ENCODE measurements at regions of chr6 and their contacts with region 1.

Region 1: DNA sequence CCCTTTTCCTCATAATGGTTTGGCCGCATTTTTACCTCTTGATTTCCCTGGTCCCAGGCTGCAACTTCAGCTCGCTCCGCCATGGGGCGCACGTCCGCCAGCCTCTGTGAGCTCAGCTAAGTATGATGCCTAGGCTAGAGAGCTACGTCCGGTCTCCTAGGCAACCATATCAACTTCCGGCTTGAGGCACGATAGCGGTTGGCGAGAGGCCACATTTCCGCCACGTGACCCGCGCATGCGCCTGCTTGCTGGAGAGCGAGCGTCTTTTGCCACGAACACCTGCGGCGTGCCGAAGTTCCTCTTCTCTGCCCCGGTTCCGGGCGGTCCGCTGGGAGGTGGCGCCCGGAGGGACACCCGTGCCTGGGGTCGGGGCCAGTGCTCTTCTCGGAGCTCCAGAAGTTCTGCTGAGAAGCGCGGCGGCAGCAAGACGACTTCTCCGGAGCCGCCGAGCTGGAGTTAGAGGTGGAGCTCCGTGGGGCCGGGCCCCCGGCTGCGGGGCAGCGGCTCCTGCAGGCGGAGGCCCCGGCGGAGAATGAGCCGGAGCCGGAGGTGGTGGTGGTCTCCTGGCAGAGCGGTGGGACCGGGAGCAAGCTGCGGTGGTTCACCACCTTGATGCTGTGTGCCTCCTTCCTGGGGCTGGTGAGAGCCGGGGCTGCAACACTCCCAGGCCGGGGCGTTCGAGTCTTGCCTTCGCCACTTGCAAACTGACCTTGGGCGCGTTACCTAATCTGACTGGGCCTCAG is 172.0 kb downstream of the SLC16A10 start:
- DNase-seq: peak; percentile 98 to 99
- H3K4me3 ChIP-seq: peak overlapping the region; percentile 71 to 94
- H3K27ac ChIP-seq: peak overlapping the region; percentile 82
- H3K4me1 ChIP-seq: peaks cover 17% of the 10 kb centered on the region
- H3K27me3 ChIP-seq: no peaks in the 10 kb centered on the region
- CTCF ChIP-seq: peak; percentile 85 to 99 (median 89)
- POLR2A ChIP-seq: no peak

Region 2: DNA sequence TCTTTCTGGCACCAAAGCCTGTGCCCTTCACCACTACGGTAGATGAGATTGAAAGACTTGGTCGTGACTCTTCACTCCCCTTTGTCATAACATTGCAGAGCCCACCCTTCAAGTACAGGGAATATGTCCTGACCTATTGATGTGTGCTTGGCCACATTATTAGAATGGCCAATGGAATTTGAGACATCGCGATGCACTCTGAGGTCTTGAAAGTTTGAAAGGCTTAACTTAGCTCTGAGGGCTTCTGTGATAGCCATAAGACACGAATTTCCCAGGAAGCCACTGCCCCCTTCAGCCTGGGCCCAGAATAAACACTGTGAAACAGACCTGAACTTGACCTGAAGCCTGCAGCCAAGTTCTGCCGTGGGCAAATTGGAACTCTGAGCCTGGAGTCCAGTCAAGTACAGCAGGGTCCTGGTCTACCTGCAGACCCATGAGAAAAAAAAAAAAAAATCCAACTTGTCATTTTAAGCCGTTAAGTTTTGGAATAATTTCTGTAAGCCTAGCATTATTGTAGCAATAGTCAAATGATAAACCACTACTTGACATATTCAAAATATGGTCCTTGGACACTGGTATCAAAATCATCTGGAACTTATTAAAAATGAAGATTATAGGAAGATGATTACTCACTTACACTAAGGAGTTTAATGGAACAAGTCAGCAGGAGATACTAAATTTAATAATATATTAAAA is 383.4 kb after region 1 on chr6:
- intact Hi-C with region 1: loop called (anchors 10 kb)
- DNase-seq: peak in 1 of 2 donors; percentile 79
- H3K4me3 ChIP-seq: no peak overlapping the region
- H3K27ac ChIP-seq: no peak overlapping the region
- H3K4me1 ChIP-seq: peaks cover 18% of the 10 kb centered on the region
- H3K27me3 ChIP-seq: no peaks in the 10 kb centered on the region
- CTCF ChIP-seq: peak in 1 of 3 experiments; percentile 28
- POLR2A ChIP-seq: no peak

Region 3: GRCh38 chr6:112054555-112055160 is 795.4 kb after region 1 on chr6:
- intact Hi-C with region 1: loop called (anchors 10 kb)
- DNase-seq: no peak
- H3K4me3 ChIP-seq: no peak overlapping the region
- H3K27ac ChIP-seq: no peak overlapping the region
- H3K4me1 ChIP-seq: no peaks in the 10 kb centered on the region
- H3K27me3 ChIP-seq: no peaks in the 10 kb centered on the region
- CTCF ChIP-seq: no peak
- POLR2A ChIP-seq: no peak

Measured in vagina (tissue), 2 donors.